PC-9 (cell line): ENCODE measurements at regions of chr12 and their contacts with region 1.

Region 1: DNA sequence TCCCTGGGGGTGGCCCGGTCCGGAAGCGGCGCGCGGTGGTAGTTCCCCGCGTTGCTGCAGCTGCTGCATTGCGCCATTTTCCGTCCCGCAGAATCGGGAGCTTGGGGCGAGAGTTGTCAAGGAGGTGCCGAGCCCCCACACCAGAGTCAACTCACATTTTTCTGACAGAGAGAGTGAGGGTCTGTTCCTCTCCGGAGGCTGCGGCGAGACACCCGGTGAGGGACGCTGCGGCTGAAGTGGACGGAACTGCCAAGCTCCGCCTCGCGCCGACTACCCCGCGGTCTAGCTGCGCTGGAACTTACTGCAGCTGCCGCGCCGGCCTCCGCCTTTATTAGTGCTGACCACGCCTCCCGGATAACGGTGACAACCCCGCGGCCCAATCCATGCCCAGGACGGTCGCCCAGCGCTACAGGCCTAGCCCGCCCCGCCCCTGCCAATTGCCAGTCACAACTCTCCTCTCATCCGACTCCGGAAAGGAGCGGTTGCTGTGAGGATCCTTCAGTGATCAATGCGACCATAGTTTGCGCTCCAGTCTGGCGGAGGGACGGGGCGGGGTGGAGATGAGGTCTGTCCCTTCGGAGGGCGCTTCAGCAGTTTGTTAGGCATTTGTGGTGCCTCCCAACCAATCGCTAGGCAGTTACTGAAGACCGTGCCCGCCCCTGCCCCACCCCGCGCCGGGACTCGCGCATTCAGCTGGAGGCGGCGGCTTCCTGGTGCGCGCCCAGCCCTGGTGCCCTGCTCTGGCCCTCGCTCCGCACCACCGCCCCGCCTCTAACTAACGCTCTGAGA is at the start of gene VAMP1:
- DNase-seq: peak; percentile 93 to 98
- H3K4me3 ChIP-seq: peak within 1 kb of the TSS; percentile 76
- H3K27ac ChIP-seq: no peak within 1 kb of the TSS
- H3K4me1 ChIP-seq: peaks cover 15% of the 10 kb centered on the region
- H3K27me3 ChIP-seq: 0 out of 2 replicates have a peak, but pooled peaks cover 6% of the 10 kb centered on the region
- CTCF ChIP-seq: no peak
- total RNA-seq, gene VAMP1: 7.7 and 9.1 TPM in 2 replicates

Region 2: GRCh38 chr12:6033546-6033945 is 437.0 kb before region 1 on chr12:
- CTCF ChIA-PET with region 1: no interaction called
- POLR2A ChIA-PET with region 1: interaction called, 11 read pairs
- intact Hi-C with region 1: no loop called
- DNase-seq: no peak
- H3K4me3 ChIP-seq: no peak overlapping the region
- H3K27ac ChIP-seq: no peak overlapping the region
- H3K4me1 ChIP-seq: no peaks in the 10 kb centered on the region
- H3K27me3 ChIP-seq: peaks cover 21% of the 10 kb centered on the region; the same call in 1 of the 2 replicates
- CTCF ChIP-seq: no peak

Region 3: GRCh38 chr12:6195665-6196535 is 274.7 kb before region 1 on chr12:
- CTCF ChIA-PET with region 1: no interaction called
- POLR2A ChIA-PET with region 1: no interaction called
- intact Hi-C with region 1: loop called (anchors 5 kb)
- DNase-seq: peak; percentile 91 to 96
- H3K4me3 ChIP-seq: no peak overlapping the region
- H3K27ac ChIP-seq: peak overlapping the region; percentile 86
- H3K4me1 ChIP-seq: peaks cover 43% of the 10 kb centered on the region
- H3K27me3 ChIP-seq: no peaks in the 10 kb centered on the region
- CTCF ChIP-seq: peak; percentile 96

Region 4: DNA sequence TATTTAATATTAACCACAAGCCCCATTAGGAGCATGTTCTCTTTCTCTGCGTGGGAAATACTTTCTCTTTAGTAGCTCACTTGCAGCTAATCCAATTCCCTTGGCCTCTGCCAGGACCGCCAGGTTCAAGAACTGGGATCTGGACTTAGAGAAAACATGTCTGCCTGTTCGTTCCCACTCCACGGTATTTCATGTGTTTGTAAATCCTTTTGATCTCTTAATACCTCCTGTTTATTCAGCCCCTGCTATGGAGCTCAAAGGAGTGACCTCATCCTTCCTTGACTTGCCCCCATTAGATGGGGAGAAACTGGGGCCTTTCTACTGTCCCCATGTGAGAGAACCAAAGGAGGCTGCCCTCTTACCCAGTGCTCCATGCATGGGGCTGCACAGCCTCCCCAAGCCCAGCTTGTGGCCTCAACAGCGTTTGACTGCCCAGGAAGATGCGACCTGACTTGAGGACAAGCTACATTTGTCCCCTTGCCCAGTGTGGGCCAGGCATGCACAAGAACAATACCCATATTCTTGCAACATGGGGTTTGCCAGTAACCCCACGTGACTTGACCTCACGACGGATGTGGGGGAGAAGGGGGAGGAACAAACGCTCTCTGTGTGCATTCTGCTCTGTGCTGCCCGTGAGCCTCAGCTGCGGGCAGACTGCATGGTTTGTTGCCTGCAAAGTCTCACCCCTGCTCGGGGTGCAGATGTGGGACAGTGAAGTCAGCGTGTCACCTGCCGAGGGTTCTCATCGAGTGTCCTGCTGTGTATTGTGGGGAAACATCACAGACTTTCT is 240.1 kb before region 1 on chr12:
- CTCF ChIA-PET with region 1: interaction called, 11 read pairs
- POLR2A ChIA-PET with region 1: no interaction called
- intact Hi-C with region 1: no loop called
- DNase-seq: no peak
- H3K4me3 ChIP-seq: no peak overlapping the region
- H3K27ac ChIP-seq: peak overlapping the region; percentile 86
- H3K4me1 ChIP-seq: peaks cover 81% of the 10 kb centered on the region
- H3K27me3 ChIP-seq: no peaks in the 10 kb centered on the region
- CTCF ChIP-seq: no peak

Region 5: DNA sequence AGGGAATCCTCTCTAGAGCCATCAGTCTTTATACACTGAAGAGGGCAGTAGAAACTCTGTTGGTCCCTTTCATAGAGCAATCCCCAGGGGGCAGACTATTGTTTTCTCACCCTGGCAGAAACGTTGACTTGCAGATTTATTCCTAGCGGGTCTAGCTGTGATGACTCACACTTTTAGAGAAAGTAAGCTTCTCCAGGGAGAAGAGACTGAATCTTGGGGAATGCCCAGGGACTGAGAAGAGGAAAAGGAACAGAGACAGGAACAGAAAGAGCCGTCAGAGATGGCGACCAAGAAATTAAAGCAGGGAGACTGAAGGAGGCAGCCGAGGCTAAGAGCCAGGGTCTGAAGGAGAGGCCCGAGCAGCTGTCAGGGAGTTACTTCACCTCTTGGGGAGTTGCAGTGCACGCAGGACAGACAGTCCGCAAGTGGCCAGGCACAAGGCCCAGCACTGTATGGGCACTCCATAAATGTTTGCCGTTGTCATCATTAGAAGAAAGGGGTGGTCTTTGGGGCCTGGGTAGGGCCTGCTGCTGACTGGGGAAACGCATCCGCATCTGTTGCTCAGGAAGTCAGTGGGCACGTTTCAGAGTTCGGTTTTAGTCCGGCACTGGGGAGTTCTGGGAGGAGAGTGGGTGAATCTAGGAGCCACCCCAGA is 147.1 kb before region 1 on chr12:
- CTCF ChIA-PET with region 1: interaction called, 12 read pairs
- POLR2A ChIA-PET with region 1: interaction called, 7 read pairs
- intact Hi-C with region 1: loop called (anchors 5 kb)
- DNase-seq: peak; percentile 75 to 88
- H3K4me3 ChIP-seq: no peak overlapping the region
- H3K27ac ChIP-seq: peak overlapping the region; percentile 60
- H3K4me1 ChIP-seq: peaks cover 39% of the 10 kb centered on the region
- H3K27me3 ChIP-seq: no peaks in the 10 kb centered on the region
- CTCF ChIP-seq: peak; percentile 79

Region 6: DNA sequence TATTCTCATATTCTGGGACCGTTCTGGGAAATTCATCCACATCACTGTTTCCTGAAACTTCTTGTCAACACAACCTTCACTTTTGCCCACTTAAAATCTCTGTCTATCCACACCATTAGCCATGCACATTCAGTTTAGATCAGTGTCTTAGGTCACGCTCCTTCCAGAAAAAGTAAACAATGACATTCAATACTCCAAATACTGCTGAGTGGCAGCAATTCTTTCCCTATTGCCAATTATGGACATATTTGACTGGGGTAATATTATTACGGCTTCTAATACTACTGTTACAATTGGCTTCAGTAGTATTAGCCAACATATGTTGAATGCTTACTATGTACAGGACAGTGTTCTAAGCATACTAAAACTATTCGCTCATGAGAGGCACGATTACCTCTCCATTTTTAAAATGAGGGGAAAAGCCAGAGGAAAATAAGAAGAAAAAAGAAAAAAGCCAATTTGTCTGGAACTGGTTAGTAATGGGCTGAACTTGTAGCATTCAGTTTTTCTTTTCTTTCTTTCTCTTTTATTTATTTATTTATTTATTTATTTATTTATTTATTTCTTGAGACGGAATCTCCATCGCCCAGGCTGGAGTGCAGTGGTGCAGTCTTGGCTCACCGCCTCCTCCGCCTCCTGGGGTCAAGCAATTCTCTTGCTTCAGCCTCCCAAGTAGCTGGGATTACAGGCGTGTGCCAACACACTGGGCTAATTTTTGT is 63.2 kb before region 1 on chr12:
- CTCF ChIA-PET with region 1: no interaction called
- POLR2A ChIA-PET with region 1: no interaction called
- intact Hi-C with region 1: no loop called
- DNase-seq: no peak
- H3K4me3 ChIP-seq: no peak overlapping the region
- H3K27ac ChIP-seq: no peak overlapping the region
- H3K4me1 ChIP-seq: no peaks in the 10 kb centered on the region
- H3K27me3 ChIP-seq: no peaks in the 10 kb centered on the region
- CTCF ChIP-seq: no peak

Region 7: GRCh38 chr12:6423267-6424007 is 47.1 kb before region 1 on chr12:
- CTCF ChIA-PET with region 1: interaction called, 24 read pairs
- POLR2A ChIA-PET with region 1: interaction called, 6 read pairs
- intact Hi-C with region 1: loop called (anchors 1 kb)
- DNase-seq: peak; percentile 81 to 82
- H3K4me3 ChIP-seq: no peak overlapping the region
- H3K27ac ChIP-seq: no peak overlapping the region
- H3K4me1 ChIP-seq: 0 out of 2 replicates have a peak, but pooled peaks cover 3% of the 10 kb centered on the region
- H3K27me3 ChIP-seq: no peaks in the 10 kb centered on the region
- CTCF ChIP-seq: peak; percentile 95

Region 8: DNA sequence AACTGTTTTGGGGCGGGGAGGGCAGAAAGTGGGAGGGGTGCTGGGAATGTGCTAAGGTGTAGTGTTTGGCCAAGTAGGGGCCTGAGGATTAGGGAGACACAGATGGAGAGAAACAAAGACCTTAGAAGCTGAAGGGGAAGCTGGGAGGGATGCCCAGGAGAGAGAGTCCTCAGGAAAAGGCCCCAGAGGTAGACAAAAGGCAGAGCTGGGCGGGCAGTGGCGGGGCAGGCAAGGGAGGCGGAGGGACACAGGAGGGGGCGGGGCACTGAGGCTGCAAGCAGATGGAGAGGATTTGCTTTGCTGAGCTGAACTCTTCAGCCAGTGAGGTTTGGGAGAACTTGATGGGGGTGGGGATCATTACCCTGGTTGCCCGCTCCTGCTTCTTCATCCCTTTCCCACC is 298.4 kb after region 1 on chr12:
- CTCF ChIA-PET with region 1: no interaction called
- POLR2A ChIA-PET with region 1: no interaction called
- intact Hi-C with region 1: no loop called
- DNase-seq: peak in 1 of 2 experiments; percentile 47
- H3K4me3 ChIP-seq: no peak overlapping the region
- H3K27ac ChIP-seq: no peak overlapping the region
- H3K4me1 ChIP-seq: peaks cover 29% of the 10 kb centered on the region
- H3K27me3 ChIP-seq: no peaks in the 10 kb centered on the region
- CTCF ChIP-seq: no peak

Region 9: GRCh38 chr12:6839482-6840201 is 369.1 kb after region 1 on chr12:
- CTCF ChIA-PET with region 1: no interaction called
- POLR2A ChIA-PET with region 1: interaction called, 24 read pairs
- intact Hi-C with region 1: no loop called
- DNase-seq: peak; percentile 58 to 60
- H3K4me3 ChIP-seq: no peak overlapping the region
- H3K27ac ChIP-seq: no peak overlapping the region
- H3K4me1 ChIP-seq: no peaks in the 10 kb centered on the region
- H3K27me3 ChIP-seq: no peaks in the 10 kb centered on the region; the same call in 1 of the 2 replicates
- CTCF ChIP-seq: peak; percentile 56; the same call in 1 of the 2 replicates